CD4-positive, alpha-beta memory T cell (primary cell): ENCODE measurements at regions of chr10 and their contacts with region 1.

Region 1: GRCh38 chr10:125982260-125982948 is 86.0 kb downstream of the FANK1 start:
- DNase-seq: peak in 4 of 5 donors; percentile 32 to 45 (median 38)
- H3K4me3 ChIP-seq: no peak overlapping the region
- H3K4me3 Mint-ChIP-seq: no peak overlapping the region
- H3K27ac ChIP-seq: no peak overlapping the region
- H3K27ac Mint-ChIP-seq: no peak overlapping the region
- H3K4me1 ChIP-seq: no peaks in the 10 kb centered on the region
- H3K4me1 Mint-ChIP-seq: no peaks in the 10 kb centered on the region
- H3K27me3 ChIP-seq: no peaks in the 10 kb centered on the region
- H3K27me3 Mint-ChIP-seq: peaks cover 6 to 7% of the 10 kb centered on the region in 2 donors

Region 2: DNA sequence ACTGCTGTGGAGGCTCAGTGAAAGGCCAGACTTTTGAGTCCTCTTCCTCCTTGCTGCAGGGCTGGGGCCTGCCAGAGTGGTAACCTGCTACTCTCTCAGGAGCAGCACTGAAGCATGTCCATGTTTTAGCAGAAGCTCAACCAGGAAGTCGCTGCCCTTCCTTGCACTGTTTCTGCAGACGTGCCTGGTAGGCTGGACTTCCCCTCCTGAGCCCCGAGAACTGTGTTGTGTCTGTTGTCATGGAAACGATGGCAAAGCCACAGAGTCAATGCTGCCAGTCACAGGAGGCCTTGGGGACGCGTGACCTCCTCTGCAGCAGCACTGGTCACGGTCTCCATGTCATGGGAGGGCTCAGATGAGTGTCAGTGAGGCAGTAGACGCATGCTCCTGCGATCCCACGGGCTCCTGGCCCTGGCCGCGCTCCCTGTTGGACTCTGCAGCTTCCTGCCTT is 59.4 kb after region 1 on chr10:
- CTCF ChIA-PET with region 1: no interaction called
- POLR2A ChIA-PET with region 1: no interaction called
- intact Hi-C with region 1: no loop called
- DNase-seq: peak; percentile 61 to 81 (median 79)
- H3K4me3 ChIP-seq: no peak overlapping the region
- H3K4me3 Mint-ChIP-seq: peak overlapping the region in 7 of 8 donors; percentile 0 to 71 (median 15)
- H3K27ac ChIP-seq: peak overlapping the region; percentile 19
- H3K27ac Mint-ChIP-seq: peak overlapping the region; percentile 72 to 96 (median 90)
- H3K4me1 ChIP-seq: peaks cover 14% of the 10 kb centered on the region
- H3K4me1 Mint-ChIP-seq: peaks cover 8 to 9% (median 9%) of the 10 kb centered on the region in 4 donors
- H3K27me3 ChIP-seq: no peaks in the 10 kb centered on the region
- H3K27me3 Mint-ChIP-seq: peaks cover 0 to 1% of the 10 kb centered on the region in 2 donors

Region 3: GRCh38 chr10:127853868-127854768 is 1871.7 kb after region 1 on chr10:
- CTCF ChIA-PET with region 1: interaction called, 8 read pairs
- POLR2A ChIA-PET with region 1: no interaction called
- intact Hi-C with region 1: loop called (anchors 1 kb)
- DNase-seq: peak in 4 of 5 donors; percentile 26 to 36 (median 35)
- H3K4me3 ChIP-seq: no peak overlapping the region
- H3K4me3 Mint-ChIP-seq: peak overlapping the region in 1 of 8 donors; percentile 21
- H3K27ac ChIP-seq: no peak overlapping the region
- H3K27ac Mint-ChIP-seq: no peak overlapping the region
- H3K4me1 ChIP-seq: peaks cover 3% of the 10 kb centered on the region
- H3K4me1 Mint-ChIP-seq: peaks cover 0 to 7% (median under 1%) of the 10 kb centered on the region in 4 donors
- H3K27me3 ChIP-seq: peaks cover 4% of the 10 kb centered on the region
- H3K27me3 Mint-ChIP-seq: peaks cover 4 to 6% of the 10 kb centered on the region in 2 donors